A673 (cell line): ENCODE measurements at regions of chr3 and their contacts with region 1.

Region 1: GRCh38 chr3:119559441-119559963 is at the start of gene CD80:
- DNase-seq: peak; percentile 63
- H3K4me3 ChIP-seq: no peak within 1 kb of the TSS
- H3K27ac ChIP-seq: no peak within 1 kb of the TSS
- H3K4me1 ChIP-seq: no peaks in the 10 kb centered on the region
- H3K27me3 ChIP-seq: no peaks in the 10 kb centered on the region
- CTCF ChIP-seq: peak; percentile 62
- total RNA-seq, gene CD80: not detected in 2 replicates

Region 2: GRCh38 chr3:119098619-119099222 is 460.8 kb before region 1 on chr3:
- CTCF ChIA-PET with region 1: no interaction called
- POLR2A ChIA-PET with region 1: no interaction called
- intact Hi-C with region 1: no loop called
- DNase-seq: peak; percentile 49
- H3K4me3 ChIP-seq: no peak overlapping the region
- H3K27ac ChIP-seq: no peak overlapping the region
- H3K4me1 ChIP-seq: no peaks in the 10 kb centered on the region
- H3K27me3 ChIP-seq: no peaks in the 10 kb centered on the region
- CTCF ChIP-seq: peak; percentile 78

Region 3: GRCh38 chr3:119279101-119279554 is 280.4 kb before region 1 on chr3:
- CTCF ChIA-PET with region 1: no interaction called
- POLR2A ChIA-PET with region 1: no interaction called
- intact Hi-C with region 1: loop called (anchors 2 kb)
- DNase-seq: no peak
- H3K4me3 ChIP-seq: no peak overlapping the region
- H3K27ac ChIP-seq: no peak overlapping the region
- H3K4me1 ChIP-seq: no peaks in the 10 kb centered on the region
- H3K27me3 ChIP-seq: no peaks in the 10 kb centered on the region
- CTCF ChIP-seq: no peak

Region 4: GRCh38 chr3:119443179-119443578 is 116.3 kb before region 1 on chr3:
- CTCF ChIA-PET with region 1: no interaction called
- POLR2A ChIA-PET with region 1: no interaction called
- intact Hi-C with region 1: no loop called
- DNase-seq: no peak
- H3K4me3 ChIP-seq: no peak overlapping the region
- H3K27ac ChIP-seq: no peak overlapping the region
- H3K4me1 ChIP-seq: no peaks in the 10 kb centered on the region
- H3K27me3 ChIP-seq: no peaks in the 10 kb centered on the region
- CTCF ChIP-seq: no peak

Region 5: GRCh38 chr3:119579366-119580165 is 20.1 kb after region 1 on chr3 and contains the start of gene ADPRH:
- CTCF ChIA-PET with region 1: no interaction called
- POLR2A ChIA-PET with region 1: interaction called, 22 read pairs
- intact Hi-C with region 1: no loop called
- DNase-seq: peak; percentile 62
- H3K4me3 ChIP-seq: peak within 1 kb of the TSS; percentile 49
- H3K27ac ChIP-seq: no peak within 1 kb of the TSS
- H3K4me1 ChIP-seq: no peaks in the 10 kb centered on the region
- H3K27me3 ChIP-seq: no peaks in the 10 kb centered on the region
- CTCF ChIP-seq: no peak
- total RNA-seq, gene ADPRH: 0.37 TPM in 2 replicates